Activated CD8-positive, alpha-beta T cell treated with anti-CD3 and anti-CD28 coated beads for 36 hours (primary cell): ENCODE measurements at regions of chr9 and their contacts with region 1.

Region 1: GRCh38 chr9:4984621-4985385 is at the start of gene JAK2:
- DNase-seq: peak; percentile 90
- ATAC-seq: peak; percentile 83
- H3K4me3 Mint-ChIP-seq: no peak within 1 kb of the TSS
- H3K27ac Mint-ChIP-seq: peak within 1 kb of the TSS; percentile 91
- H3K4me1 Mint-ChIP-seq: peaks cover 42% of the 10 kb centered on the region
- H3K27me3 Mint-ChIP-seq: no peaks in the 10 kb centered on the region
- CTCF ChIP-seq: peak; percentile 28
- total RNA-seq, gene JAK2: 28.4 to 29.0 TPM

Region 2: GRCh38 chr9:4762108-4762885 is 222.5 kb before region 1 on chr9:
- CTCF ChIA-PET with region 1: interaction called, 149 read pairs
- POLR2A ChIA-PET with region 1: interaction called, 3 read pairs
- intact Hi-C with region 1: loop called (anchors 2 kb)
- DNase-seq: peak; percentile 92
- ATAC-seq: peak; percentile 82
- H3K4me3 Mint-ChIP-seq: peak overlapping the region; percentile 40
- H3K27ac Mint-ChIP-seq: peak overlapping the region; percentile 49
- H3K4me1 Mint-ChIP-seq: peaks cover 12% of the 10 kb centered on the region
- H3K27me3 Mint-ChIP-seq: peaks cover 11% of the 10 kb centered on the region
- CTCF ChIP-seq: peak; percentile 83

Region 3: DNA sequence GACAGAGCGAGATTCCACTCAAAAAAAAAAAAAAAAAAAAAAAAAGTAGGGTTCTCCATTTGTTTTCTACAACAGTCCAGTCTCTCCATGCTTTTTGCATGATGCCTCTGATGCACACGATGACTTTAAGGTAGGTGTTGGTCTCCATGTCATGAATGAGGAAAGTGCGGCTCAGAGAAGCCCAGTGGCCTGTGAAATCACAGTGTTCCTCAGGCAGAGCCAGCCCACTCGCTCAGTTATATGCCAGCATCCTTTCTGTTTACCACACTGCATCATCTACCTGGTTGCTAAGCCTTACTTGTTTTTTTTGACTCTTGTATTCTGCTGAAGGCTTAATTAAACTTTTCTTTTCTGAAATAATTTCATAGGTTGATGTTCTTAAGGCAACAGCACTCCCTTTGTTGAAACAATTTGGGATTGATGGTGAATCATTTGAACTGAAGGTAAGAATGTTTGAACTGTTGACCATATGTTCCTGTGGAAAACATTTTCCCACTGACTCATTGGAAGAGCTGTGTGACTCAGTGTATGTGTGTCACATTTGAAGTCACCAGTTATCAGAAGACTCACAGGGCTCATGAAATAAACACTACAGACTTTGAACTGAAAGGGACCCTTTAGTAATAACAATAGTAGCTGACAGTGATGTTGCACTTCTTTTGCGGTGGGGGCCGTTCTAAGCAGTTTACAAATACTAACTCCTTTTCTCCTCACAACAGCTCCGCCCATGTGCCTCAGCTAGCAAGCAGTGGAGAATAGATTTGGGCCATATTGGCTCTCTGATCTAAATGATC is 151.8 kb before region 1 on chr9:
- CTCF ChIA-PET with region 1: interaction called, 5 read pairs
- POLR2A ChIA-PET with region 1: no interaction called
- intact Hi-C with region 1: loop called (anchors 5 kb)
- DNase-seq: peak; percentile 79
- ATAC-seq: peak; percentile 90
- H3K4me3 Mint-ChIP-seq: no peak overlapping the region
- H3K27ac Mint-ChIP-seq: peak overlapping the region; percentile 89
- H3K4me1 Mint-ChIP-seq: peaks cover 44% of the 10 kb centered on the region
- H3K27me3 Mint-ChIP-seq: no peaks in the 10 kb centered on the region
- CTCF ChIP-seq: no peak

Region 4: GRCh38 chr9:4902135-4902475 is 82.7 kb before region 1 on chr9:
- CTCF ChIA-PET with region 1: no interaction called
- POLR2A ChIA-PET with region 1: no interaction called
- intact Hi-C with region 1: no loop called
- DNase-seq: no peak
- ATAC-seq: no peak
- H3K4me3 Mint-ChIP-seq: no peak overlapping the region
- H3K27ac Mint-ChIP-seq: no peak overlapping the region
- H3K4me1 Mint-ChIP-seq: no peaks in the 10 kb centered on the region
- H3K27me3 Mint-ChIP-seq: no peaks in the 10 kb centered on the region
- CTCF ChIP-seq: no peak

Region 5: GRCh38 chr9:4923580-4924544 is 60.9 kb before region 1 on chr9:
- CTCF ChIA-PET with region 1: interaction called, 35 read pairs
- POLR2A ChIA-PET with region 1: interaction called, 10 read pairs
- intact Hi-C with region 1: no loop called
- DNase-seq: peak; percentile 30
- ATAC-seq: peak; percentile 79
- H3K4me3 Mint-ChIP-seq: no peak overlapping the region
- H3K27ac Mint-ChIP-seq: peak overlapping the region; percentile 65
- H3K4me1 Mint-ChIP-seq: peaks cover 28% of the 10 kb centered on the region
- H3K27me3 Mint-ChIP-seq: no peaks in the 10 kb centered on the region
- CTCF ChIP-seq: peak; percentile 39

Region 6: GRCh38 chr9:4939118-4939561 is 45.7 kb before region 1 on chr9:
- CTCF ChIA-PET with region 1: interaction called, 10 read pairs
- POLR2A ChIA-PET with region 1: interaction called, 17 read pairs
- intact Hi-C with region 1: no loop called
- DNase-seq: peak; percentile 47
- ATAC-seq: peak; percentile 63
- H3K4me3 Mint-ChIP-seq: peak overlapping the region; percentile 14
- H3K27ac Mint-ChIP-seq: peak overlapping the region; percentile 89
- H3K4me1 Mint-ChIP-seq: peaks cover 76% of the 10 kb centered on the region
- H3K27me3 Mint-ChIP-seq: no peaks in the 10 kb centered on the region
- CTCF ChIP-seq: no peak

Region 7: GRCh38 chr9:5140151-5140550 is 155.3 kb after region 1 on chr9:
- CTCF ChIA-PET with region 1: no interaction called
- POLR2A ChIA-PET with region 1: no interaction called
- intact Hi-C with region 1: no loop called
- DNase-seq: no peak
- ATAC-seq: peak; percentile 34
- H3K4me3 Mint-ChIP-seq: no peak overlapping the region
- H3K27ac Mint-ChIP-seq: no peak overlapping the region
- H3K4me1 Mint-ChIP-seq: peaks cover 5% of the 10 kb centered on the region
- H3K27me3 Mint-ChIP-seq: no peaks in the 10 kb centered on the region
- CTCF ChIP-seq: no peak

Region 8: DNA sequence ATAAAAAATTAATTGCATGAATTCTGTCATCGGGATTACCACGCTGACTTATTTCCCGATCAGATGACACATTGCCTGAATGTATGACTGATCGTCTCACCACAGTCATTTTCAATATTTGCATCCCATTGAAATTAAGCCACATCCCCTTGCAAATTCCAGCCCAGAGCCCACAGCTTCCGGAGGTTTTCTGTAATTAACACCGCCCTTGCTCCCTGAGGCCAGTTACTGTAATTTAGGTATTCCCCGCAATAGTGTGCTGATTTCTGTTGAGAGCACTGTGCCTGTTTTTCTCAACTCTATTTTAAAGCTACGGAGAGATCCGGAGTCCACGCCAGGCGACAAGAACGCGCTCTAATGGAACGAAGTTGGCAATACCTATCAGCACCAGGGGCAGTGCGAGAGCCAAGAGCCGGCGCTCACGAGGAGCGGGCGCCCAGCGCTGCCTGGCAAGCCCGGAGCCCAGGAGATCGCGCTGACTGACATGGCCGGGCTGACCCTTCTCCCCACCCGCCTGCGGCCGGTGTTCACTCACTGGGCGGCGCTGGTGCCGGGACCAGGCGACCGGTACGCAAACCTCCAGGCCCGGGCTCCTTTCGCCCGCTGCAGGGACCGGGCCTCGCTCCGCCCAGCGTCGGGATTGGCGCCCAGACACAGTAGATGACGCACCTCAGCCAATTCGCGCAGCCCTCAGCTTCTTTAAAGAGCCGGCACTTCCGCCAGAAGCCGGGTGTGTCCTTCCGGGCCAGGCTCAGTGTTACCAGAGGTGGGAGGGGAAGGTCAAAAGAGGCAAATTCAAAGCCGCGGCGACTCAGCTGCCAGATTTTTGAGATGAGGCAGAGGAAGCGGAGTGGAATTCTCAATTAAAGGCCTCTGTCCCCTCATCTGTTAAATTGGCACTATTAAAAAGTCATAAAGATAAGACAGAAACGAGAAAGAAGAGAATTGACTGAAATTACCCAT is 452.7 kb after region 1 on chr9 and contains the start of gene PLGRKT:
- CTCF ChIA-PET with region 1: no interaction called
- POLR2A ChIA-PET with region 1: no interaction called
- intact Hi-C with region 1: loop called (anchors 5 kb)
- DNase-seq: peak; percentile 95
- ATAC-seq: peak; percentile 96
- H3K4me3 Mint-ChIP-seq: peak within 1 kb of the TSS; percentile 97
- H3K27ac Mint-ChIP-seq: peak within 1 kb of the TSS; percentile 97
- H3K4me1 Mint-ChIP-seq: peaks cover 40% of the 10 kb centered on the region
- H3K27me3 Mint-ChIP-seq: no peaks in the 10 kb centered on the region
- CTCF ChIP-seq: no peak
- total RNA-seq, gene PLGRKT: 26.6 to 28.5 TPM